ENCODE measurements at regions of chr6 and their contacts with region 1.

Region 1: DNA sequence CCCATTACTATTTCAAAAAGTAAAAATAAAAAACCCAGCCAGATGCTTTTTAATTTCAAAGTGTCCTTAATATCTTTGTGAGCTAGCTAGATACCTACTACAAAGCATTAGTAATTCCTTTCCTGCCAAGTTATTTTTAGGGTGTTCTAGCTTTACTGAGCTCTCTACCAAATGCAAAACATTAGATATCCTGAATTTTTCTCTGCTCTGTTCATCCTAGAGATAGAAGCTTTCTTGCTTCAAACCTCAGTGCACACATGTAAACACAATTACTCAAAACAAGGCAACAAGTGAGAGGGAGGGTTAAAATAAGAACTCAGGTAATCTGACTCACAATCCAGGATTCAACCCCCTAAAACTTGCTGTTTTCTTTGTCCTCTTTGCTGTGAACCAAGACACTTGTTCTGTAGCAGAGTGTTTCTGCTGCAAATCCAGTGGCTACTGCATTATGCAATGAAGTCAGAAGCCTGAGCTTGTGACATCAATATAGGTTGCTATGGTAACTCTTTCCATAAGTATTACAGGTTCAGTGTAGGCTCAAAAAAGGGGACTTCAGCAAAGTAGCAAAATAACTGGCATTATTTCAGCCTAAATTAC is 72.6 kb upstream of the STXBP5 start:
- DNase-seq: no peak

Region 2: GRCh38 chr6:147099974-147100373 is 31.7 kb before region 1 on chr6:
- intact Hi-C with region 1: no loop called
- DNase-seq: no peak

Region 3: DNA sequence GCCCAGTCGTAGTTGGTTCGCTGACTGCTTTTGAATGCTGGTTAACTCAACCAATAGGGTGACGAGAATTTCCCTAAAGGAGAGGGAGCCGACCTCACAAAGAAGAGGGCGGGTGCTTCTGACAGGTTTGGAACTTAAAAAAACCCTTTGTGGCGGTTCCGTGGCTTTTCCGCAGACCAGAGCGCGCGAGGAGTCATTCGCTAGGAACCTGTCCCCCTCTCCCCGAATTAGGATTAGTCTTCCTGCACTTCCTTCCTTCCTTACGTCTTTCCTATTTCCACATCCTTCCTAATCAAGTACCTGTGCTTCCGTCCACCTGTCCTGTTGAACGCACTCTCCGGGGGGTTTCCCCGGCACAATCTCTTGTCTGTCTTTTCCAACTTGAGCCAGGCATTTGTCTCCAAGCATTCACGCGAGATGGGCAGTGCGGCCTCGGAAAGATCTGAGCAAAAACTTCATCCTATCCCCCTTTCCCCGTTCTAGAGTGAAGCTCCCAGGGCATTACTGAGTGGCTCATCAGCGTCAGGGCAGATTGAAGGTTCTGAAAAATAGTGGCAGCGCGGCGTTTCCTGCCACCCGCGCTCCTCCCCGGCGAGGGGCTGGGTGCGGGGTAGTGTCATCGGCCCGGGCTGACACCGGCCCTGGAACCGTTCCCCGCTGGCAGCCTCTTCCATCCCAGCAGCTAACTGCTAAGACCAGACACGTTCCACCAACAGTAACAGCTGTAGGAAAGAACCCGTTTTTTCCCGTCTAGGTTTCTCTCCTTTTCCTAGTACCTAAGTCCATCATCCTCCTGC is 71.1 kb after region 1 on chr6:
- intact Hi-C with region 1: loop called (anchors 5 kb)
- DNase-seq: peak; percentile 90

Measured in cardiac septum (tissue), 1 donor.